HepG2 (cell line): ENCODE measurements at regions of chr3 and their contacts with region 1.

Region 1: DNA sequence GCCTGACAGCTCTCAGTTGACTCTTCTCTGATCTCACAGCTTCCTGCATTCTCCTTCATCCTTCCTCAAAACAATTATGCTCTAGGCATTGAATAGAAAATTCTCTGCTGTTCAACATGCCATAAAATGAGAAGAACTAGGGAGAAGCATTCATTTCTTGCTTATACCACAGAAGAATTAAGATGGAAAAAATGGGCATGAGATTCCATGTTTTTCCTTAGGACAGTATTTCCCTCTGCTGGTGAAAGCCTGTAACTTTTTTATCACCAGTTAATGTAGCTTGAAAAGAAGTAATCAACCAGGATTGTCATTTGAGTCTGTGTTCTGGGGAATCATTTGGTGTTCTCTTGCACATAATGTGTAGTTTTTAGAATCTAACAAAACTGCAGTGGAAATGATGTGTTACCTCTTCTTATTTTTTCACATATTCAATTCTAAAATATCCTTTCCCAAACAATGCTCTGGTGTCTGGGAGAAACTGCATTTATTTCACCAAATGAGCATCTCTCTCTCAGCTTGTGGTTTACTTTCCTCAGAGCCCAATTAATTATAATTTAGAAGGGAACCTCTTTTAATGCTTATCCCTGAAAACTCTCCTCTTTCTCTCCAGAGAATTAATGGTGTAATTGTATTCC is 92.8 kb upstream of the DCBLD2 start:
- DNase-seq: peak; percentile 34
- ATAC-seq: peak; percentile 57
- H3K4me3 ChIP-seq: no peak overlapping the region
- H3K27ac ChIP-seq: no peak overlapping the region
- H3K4me1 ChIP-seq: no peaks in the 10 kb centered on the region
- H3K27me3 ChIP-seq: no peaks in the 10 kb centered on the region; a peak in 1 of 5 replicates
- CTCF ChIP-seq: peak; percentile 62
- EP300 ChIP-seq: no peak
- POLR2A ChIP-seq: no peak
- RAD21 ChIP-seq: peak; percentile 29; the same call in 1 of the 2 replicates

Region 2: DNA sequence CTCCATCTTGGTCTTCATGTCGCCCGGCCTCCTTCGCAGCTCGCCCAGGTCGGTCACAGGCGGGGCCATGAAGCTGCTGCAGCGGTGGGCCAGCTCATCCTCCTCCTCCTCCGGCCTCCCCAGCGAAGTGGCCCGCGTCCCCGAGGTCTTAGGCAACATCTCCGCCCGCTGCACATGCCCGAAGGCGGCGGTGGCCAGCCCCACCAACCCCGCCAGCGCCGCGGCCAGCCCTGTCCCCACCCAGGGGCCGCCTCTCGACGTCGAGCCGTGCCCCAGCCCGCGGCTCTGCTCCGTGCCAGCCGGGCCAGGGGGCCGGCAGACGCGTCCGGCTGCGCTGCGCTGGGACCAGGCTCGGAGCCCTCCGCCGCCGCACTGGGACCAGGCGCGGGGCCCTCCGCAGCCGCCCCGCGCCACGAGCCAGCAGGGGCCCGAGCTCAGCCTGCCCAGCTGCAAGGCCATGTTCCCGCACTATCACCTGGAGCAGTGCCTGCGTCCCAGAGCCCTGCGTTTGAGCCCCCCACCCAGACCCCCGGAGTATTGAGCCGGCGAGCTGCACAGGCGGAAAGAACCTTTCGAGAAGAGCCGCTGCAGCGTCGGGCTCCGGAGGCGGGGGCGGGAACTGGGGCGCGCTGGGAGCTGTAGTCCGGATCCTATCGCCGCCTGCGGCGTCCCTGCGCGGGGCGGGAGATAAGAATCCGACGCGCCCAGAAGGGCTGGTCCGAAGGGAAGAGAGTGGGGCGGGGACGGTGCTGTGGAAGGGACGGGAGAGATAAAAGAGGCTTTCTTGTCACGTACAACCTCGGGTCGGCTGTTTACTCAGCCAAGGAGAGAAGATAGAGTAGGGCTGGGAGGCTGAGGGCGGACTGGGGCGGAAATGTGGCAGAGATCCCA is 401.0 kb before region 1 on chr3 and contains the start of gene CPOX:
- CTCF ChIA-PET with region 1: no interaction called
- POLR2A ChIA-PET with region 1: no interaction called
- in situ Hi-C with region 1: loop called (anchors 10 kb)
- intact Hi-C with region 1: no loop called
- DNase-seq: peak; percentile 96
- ATAC-seq: peak; percentile 98
- H3K4me3 ChIP-seq: peak within 1 kb of the TSS; percentile 66 to 85 (median 82)
- H3K27ac ChIP-seq: peak within 1 kb of the TSS; percentile 66
- H3K4me1 ChIP-seq: peaks cover 51% of the 10 kb centered on the region
- H3K27me3 ChIP-seq: no peaks in the 10 kb centered on the region
- CTCF ChIP-seq: peak; percentile 23
- EP300 ChIP-seq: peak in 1 of 2 experiments; percentile 60; a peak in 2 of 4 replicates
- POLR2A ChIP-seq: peak; percentile 13 to 66; a peak in 3 of 4 replicates
- RAD21 ChIP-seq: no peak; the same call in 1 of the 2 replicates
- total RNA-seq, gene CPOX: 35.2 and 37.2 TPM in 2 replicates

Region 3: DNA sequence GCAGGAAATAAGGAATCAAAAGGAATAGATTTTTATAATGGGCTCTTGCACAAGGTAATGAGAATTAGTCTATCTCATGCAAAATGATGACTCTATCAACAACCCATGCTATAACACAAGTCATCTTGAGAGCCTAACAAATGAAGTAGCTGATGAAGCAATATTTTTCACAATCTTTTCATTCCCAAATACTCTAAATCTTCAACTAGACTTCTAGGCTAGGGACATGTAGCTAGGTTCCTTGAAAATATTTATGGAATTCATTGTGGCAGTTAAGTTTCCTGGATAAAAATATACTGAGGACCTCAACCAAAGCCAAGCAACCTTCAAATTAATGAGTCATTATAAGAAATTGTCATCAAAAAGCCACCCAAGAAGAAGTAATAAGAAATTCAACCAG is 148.1 kb before region 1 on chr3:
- CTCF ChIA-PET with region 1: no interaction called
- POLR2A ChIA-PET with region 1: no interaction called
- in situ Hi-C with region 1: no loop called
- intact Hi-C with region 1: no loop called
- DNase-seq: no peak
- ATAC-seq: no peak
- H3K4me3 ChIP-seq: no peak overlapping the region
- H3K27ac ChIP-seq: no peak overlapping the region
- H3K4me1 ChIP-seq: no peaks in the 10 kb centered on the region
- H3K27me3 ChIP-seq: no peaks in the 10 kb centered on the region
- CTCF ChIP-seq: no peak
- EP300 ChIP-seq: no peak
- POLR2A ChIP-seq: no peak
- RAD21 ChIP-seq: no peak

Region 4: GRCh38 chr3:98893740-98894139 is 100.5 kb before region 1 on chr3:
- CTCF ChIA-PET with region 1: no interaction called
- POLR2A ChIA-PET with region 1: no interaction called
- in situ Hi-C with region 1: loop called (anchors 10 kb)
- intact Hi-C with region 1: no loop called
- DNase-seq: no peak
- ATAC-seq: no peak; the same call in 2 of the 3 replicates
- H3K4me3 ChIP-seq: no peak overlapping the region
- H3K27ac ChIP-seq: no peak overlapping the region
- H3K4me1 ChIP-seq: peaks cover 55% of the 10 kb centered on the region
- H3K27me3 ChIP-seq: no peaks in the 10 kb centered on the region
- CTCF ChIP-seq: no peak
- EP300 ChIP-seq: no peak
- POLR2A ChIP-seq: no peak
- RAD21 ChIP-seq: no peak

Region 5: DNA sequence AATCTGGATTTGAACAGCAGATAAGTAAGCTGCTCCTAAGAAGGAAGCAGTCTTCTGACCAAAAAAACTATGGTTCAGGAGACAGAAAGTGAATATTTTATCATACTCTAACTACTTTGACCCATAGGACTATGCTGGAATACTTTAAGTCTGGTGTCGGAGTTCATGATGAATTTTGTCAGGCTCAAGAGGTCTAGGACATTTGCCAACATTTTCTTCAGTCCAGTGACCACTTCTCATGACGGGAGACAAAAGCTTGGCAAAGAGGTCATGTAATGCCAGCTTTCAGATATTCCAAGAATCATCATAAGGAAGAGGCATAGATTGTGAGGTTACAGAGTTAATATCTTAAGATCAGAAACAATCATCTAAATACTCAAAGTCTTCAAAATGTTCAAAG is 72.3 kb before region 1 on chr3:
- CTCF ChIA-PET with region 1: no interaction called
- POLR2A ChIA-PET with region 1: no interaction called
- in situ Hi-C with region 1: no loop called
- intact Hi-C with region 1: no loop called
- DNase-seq: no peak
- ATAC-seq: no peak
- H3K4me3 ChIP-seq: no peak overlapping the region
- H3K27ac ChIP-seq: no peak overlapping the region
- H3K4me1 ChIP-seq: peaks cover 12% of the 10 kb centered on the region
- H3K27me3 ChIP-seq: no peaks in the 10 kb centered on the region
- CTCF ChIP-seq: no peak
- EP300 ChIP-seq: no peak
- POLR2A ChIP-seq: no peak
- RAD21 ChIP-seq: no peak

Region 6: GRCh38 chr3:99009851-99010250 is 15.6 kb after region 1 on chr3:
- CTCF ChIA-PET with region 1: no interaction called
- POLR2A ChIA-PET with region 1: no interaction called
- in situ Hi-C with region 1: no loop called
- intact Hi-C with region 1: no loop called
- DNase-seq: no peak
- ATAC-seq: no peak
- H3K4me3 ChIP-seq: no peak overlapping the region
- H3K27ac ChIP-seq: no peak overlapping the region
- H3K4me1 ChIP-seq: no peaks in the 10 kb centered on the region
- H3K27me3 ChIP-seq: no peaks in the 10 kb centered on the region
- CTCF ChIP-seq: no peak
- EP300 ChIP-seq: no peak
- POLR2A ChIP-seq: no peak
- RAD21 ChIP-seq: no peak